GM10248 (cell line): ENCODE measurements at regions of chr1 and their contacts with region 1.

Region 1: DNA sequence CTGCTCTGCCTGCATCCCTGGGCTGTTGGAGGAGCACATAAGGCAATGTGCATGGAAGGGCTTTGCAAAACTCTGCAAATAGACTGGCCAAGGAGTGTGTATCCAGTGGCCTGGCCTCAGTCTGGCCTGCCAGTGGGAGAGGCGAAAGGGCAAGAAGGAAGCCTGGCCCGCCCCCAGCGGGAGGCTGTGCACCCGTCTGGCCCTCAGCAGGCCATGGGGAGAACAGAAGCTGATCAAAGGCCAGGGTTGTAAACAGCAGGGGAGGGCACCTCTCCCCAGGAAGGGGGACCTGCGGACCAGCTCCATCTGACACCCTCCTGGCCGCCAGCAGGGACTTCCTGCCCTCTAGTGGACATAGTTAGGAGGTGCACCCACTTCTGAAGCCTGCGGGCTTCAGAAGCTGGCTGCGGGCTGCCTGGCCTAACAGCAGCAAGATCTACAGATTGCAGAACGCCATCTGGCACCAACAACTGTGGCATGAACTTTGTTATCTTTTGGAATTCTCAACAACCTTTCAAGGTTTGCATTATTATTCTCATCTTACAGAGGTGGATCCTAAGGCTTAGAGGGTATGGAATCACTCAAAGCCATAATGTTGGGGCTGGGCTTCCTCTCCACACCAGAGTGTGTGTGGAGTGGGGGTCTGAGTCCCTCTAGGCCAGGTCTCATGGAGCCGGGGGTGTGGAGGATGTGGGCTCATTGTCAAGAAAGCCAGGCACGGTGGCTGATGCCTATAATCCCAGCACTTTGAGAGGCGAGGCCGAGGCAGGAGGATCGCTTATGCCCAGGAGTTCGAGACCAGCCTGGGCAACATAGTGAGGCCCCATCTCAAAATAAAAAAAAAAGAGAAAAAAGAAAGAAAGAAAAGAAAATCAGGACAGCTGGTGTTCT is 18.9 kb upstream of the CDK18 start:
- DNase-seq: peak; percentile 87
- CTCF ChIP-seq: peak; percentile 90

Region 2: DNA sequence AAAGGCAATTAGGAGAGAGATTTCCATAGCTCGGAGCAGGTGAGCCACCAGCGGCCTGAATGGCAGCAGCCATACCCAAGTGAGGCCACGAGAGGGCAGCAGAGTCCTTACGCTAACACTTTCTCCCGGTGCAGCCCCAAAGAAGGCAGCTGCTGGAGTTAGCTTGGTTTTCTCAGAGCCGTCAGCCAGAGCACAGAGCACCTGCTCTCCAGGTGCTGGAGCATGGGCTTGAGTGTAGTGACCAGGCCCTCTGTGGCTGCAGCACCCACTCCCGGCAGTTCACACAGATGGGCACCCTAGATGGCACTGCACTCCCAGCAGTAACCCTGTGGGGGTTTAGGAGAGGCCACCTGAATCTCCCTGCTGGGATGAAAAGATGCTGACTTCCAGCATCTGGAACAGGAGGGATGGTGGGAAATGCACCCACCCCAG is 212.0 kb before region 1 on chr1:
- CTCF ChIA-PET with region 1: interaction called, 18 read pairs
- POLR2A ChIA-PET with region 1: no interaction called
- DNase-seq: peak; percentile 90
- CTCF ChIP-seq: peak; percentile 91

Region 3: DNA sequence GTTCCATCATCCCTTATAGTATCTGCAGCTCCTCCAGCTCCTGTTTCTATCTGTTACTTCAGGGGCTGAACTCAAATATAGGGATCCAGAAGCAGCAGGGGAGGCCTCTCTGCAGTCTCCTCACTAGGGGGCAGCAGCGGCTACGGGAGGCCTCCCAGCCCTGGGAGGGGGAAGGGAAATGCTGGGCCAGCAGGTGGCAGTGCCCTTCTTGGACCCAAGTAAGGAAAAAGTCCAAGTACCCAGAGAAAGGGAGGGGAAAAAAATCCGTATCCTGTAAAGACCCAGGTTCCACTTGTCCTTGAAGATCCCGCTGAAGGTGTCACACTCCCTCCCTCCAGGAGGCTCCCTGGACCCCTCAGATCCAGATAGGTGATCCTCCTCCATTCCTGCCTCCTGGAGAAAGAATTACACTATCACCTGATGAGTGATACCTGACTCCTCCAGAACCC is 149.9 kb before region 1 on chr1:
- CTCF ChIA-PET with region 1: interaction called, 12 read pairs
- POLR2A ChIA-PET with region 1: no interaction called
- DNase-seq: peak; percentile 78
- CTCF ChIP-seq: peak; percentile 96

Region 4: GRCh38 chr1:205387845-205388244 is 97.7 kb before region 1 on chr1:
- CTCF ChIA-PET with region 1: interaction called, 11 read pairs
- POLR2A ChIA-PET with region 1: no interaction called
- DNase-seq: no peak
- CTCF ChIP-seq: no peak

Region 5: DNA sequence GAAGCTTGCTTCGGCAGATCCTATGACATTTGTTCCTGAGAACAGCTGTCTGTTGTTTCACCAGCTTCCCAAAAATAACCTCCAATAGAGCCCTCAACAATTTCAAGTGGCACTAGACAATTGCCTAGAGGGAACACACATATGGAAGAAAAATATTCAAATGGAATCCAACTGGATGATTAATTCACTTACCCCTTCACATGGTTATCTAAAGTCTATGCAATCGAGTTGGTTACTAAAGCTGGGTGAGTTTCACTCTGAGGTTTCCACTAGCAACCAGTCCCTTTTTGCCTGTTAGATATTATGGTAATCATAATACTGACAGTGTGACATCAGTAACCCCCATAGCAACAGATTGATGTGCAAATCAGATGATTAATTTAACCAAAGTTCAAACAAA is 63.8 kb before region 1 on chr1 and contains the start of gene LEMD1:
- CTCF ChIA-PET with region 1: interaction called, 17 read pairs
- POLR2A ChIA-PET with region 1: no interaction called
- DNase-seq: no peak
- CTCF ChIP-seq: no peak

Region 6: DNA sequence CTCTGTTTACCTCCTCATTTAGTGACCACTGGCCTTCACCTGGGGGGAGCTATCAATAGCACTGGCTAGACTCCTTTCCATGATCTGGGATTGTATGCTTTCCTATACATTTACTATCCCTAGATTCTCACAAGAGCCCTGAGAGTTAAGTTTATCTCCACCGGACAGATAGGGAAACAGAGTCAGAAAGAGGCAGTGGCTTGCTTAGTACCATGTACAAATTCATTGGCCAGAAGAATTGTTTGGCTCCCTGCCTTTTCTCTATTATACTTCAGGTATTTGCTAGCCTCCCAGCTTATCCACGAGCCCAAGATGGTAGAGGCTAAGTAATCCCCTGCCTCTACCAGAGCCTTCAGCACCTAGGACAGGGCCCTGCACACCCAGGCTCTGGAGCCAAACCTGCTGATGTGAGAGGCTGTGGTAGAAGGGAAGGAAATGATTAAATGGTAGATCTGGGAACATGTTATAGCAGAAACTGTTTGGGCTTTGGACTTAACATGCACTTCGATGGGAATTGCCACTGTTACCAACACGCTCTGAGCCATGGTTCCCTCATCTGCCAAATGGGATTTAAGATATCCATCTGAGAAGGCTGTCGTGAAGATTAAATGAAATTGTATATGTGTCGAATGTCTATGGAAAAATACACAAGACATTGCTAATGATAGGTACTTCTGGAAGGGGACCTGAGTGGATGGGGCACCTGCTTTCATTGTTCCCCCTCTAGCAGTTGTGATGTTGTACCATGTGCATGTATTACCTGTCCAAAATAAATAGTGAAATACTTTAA is 26.6 kb before region 1 on chr1:
- CTCF ChIA-PET with region 1: interaction called, 15 read pairs
- POLR2A ChIA-PET with region 1: no interaction called
- DNase-seq: no peak
- CTCF ChIP-seq: no peak

Region 7: GRCh38 chr1:205504311-205504984 is 18.9 kb after region 1 on chr1 and contains the start of gene CDK18:
- CTCF ChIA-PET with region 1: interaction called, 122 read pairs
- POLR2A ChIA-PET with region 1: no interaction called
- DNase-seq: no peak
- CTCF ChIP-seq: no peak